ENCODE measurements at regions of chr10 and their contacts with region 1.

Region 1: GRCh38 chr10:11881477-11882417 is 58.6 kb downstream of the PROSER2 start:
- DNase-seq: peak; percentile 90 to 94
- H3K4me3 ChIP-seq: peak overlapping the region; percentile 36; the same call in 1 of the 2 replicates
- H3K27ac ChIP-seq: peak overlapping the region; percentile 100
- H3K4me1 ChIP-seq: peaks cover 79% of the 10 kb centered on the region
- H3K27me3 ChIP-seq: no peaks in the 10 kb centered on the region
- CTCF ChIP-seq: peak; percentile 44

Region 2: DNA sequence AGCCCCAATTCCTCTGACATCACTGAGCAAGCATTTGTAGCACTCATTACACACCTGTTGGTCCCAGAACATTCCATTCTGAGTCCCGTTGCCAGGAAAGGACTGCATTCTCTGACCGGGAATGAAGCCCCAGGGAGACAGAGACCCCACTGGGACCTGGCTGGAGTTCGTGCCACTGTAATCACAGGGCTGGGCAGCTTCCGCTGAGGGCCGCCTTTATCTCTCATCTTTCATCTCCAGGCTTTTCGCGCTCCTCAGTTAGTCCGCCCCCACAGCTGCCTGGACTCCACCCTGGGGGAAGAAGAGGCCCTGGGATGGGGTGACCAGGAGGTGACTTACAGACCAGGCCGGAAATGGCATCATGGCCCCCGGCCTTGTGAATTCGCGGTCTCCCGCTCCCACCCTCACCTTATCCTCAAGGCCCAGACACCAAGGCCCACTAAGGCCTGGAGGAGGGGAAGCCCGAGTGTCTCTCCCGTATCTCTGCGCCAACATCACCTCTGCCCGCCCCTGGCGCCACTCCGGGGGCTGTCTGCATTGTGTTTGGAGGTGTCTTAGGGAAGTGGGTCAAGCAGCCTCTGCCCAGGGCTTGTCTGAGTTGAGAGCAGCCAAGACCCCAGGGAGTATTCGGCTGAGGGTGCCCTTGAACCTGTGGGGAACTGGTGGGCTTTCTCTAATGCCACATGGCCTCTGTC is 16.8 kb after region 1 on chr10:
- CTCF ChIA-PET with region 1: interaction called, 12 read pairs
- POLR2A ChIA-PET with region 1: interaction called, 8 read pairs
- intact Hi-C with region 1: loop called (anchors 1 kb)
- DNase-seq: peak; percentile 91 to 94
- H3K4me3 ChIP-seq: no peak overlapping the region; the same call in 1 of the 2 replicates
- H3K27ac ChIP-seq: peak overlapping the region; percentile 99
- H3K4me1 ChIP-seq: peaks cover 33% of the 10 kb centered on the region
- H3K27me3 ChIP-seq: no peaks in the 10 kb centered on the region
- CTCF ChIP-seq: no peak

Region 3: GRCh38 chr10:11986593-11987216 is 105.0 kb after region 1 on chr10:
- CTCF ChIA-PET with region 1: interaction called, 5 read pairs
- POLR2A ChIA-PET with region 1: no interaction called
- intact Hi-C with region 1: loop called (anchors 1 kb)
- DNase-seq: peak; percentile 37 to 73
- H3K4me3 ChIP-seq: no peak overlapping the region
- H3K27ac ChIP-seq: peak overlapping the region; percentile 51
- H3K4me1 ChIP-seq: peaks cover 6% of the 10 kb centered on the region; the same call in 1 of the 2 replicates
- H3K27me3 ChIP-seq: no peaks in the 10 kb centered on the region
- CTCF ChIP-seq: peak; percentile 88

Region 4: GRCh38 chr10:12129222-12130111 is 247.7 kb after region 1 on chr10 and contains the start of gene SEC61A2:
- CTCF ChIA-PET with region 1: interaction called, 11 read pairs
- POLR2A ChIA-PET with region 1: no interaction called
- intact Hi-C with region 1: no loop called
- DNase-seq: peak; percentile 67 to 98
- H3K4me3 ChIP-seq: peak within 1 kb of the TSS; percentile 79
- H3K27ac ChIP-seq: peak within 1 kb of the TSS; percentile 60
- H3K4me1 ChIP-seq: no peaks in the 10 kb centered on the region
- H3K27me3 ChIP-seq: no peaks in the 10 kb centered on the region
- CTCF ChIP-seq: no peak
- total RNA-seq, gene SEC61A2: 4.9 and 6.8 TPM in 2 replicates

Measured in PC-9 (cell line).